ENCODE measurements at regions of chr7 and their contacts with region 1.

Region 1: GRCh38 chr7:98168181-98168905 is 42.9 kb upstream of the BHLHA15 start:
- DNase-seq: peak; percentile 83
- ATAC-seq: peak; percentile 75
- H3K4me3 ChIP-seq: no peak overlapping the region
- H3K4me3 Mint-ChIP-seq: no peak overlapping the region
- H3K27ac ChIP-seq: no peak overlapping the region
- H3K27ac Mint-ChIP-seq: no peak overlapping the region
- H3K4me1 ChIP-seq: peaks cover 0 to 6% of the 10 kb centered on the region in 2 donors
- H3K4me1 Mint-ChIP-seq: peaks cover 14% of the 10 kb centered on the region
- H3K27me3 ChIP-seq: peaks cover 0 to 4% (median 0%) of the 10 kb centered on the region in 4 experiments
- H3K27me3 Mint-ChIP-seq: peaks cover 4% of the 10 kb centered on the region
- CTCF ChIP-seq: peak; percentile 95

Region 2: DNA sequence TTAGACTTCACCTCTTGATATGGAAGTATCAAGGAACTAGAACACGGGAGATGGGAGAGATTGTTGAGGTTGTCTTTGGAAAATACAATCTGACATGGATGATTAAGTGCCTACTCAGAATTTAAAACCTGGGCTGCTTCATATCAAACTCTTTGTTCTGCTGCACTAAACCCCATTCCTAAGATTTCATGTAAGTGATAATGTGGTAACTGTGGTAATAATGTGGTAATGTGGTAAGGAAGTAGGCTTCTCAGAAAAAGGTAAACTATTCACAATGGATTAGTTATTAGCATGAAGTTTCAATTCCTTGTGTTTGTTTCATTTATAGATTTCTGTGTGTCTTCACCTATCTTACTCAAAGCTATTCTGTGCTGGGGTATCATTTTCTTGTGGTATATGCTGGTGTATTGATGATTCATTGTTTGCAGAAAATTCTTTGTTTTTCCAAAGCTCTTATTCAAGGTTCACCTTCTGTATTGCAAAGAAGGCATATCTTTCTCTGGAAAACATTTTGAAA is 566.3 kb before region 1 on chr7:
- CTCF ChIA-PET with region 1: no interaction called
- POLR2A ChIA-PET with region 1: no interaction called
- intact Hi-C with region 1: no loop called
- DNase-seq: no peak
- ATAC-seq: no peak
- H3K4me3 ChIP-seq: no peak overlapping the region
- H3K4me3 Mint-ChIP-seq: no peak overlapping the region
- H3K27ac ChIP-seq: no peak overlapping the region
- H3K27ac Mint-ChIP-seq: no peak overlapping the region
- H3K4me1 ChIP-seq: no peaks in the 10 kb centered on the region
- H3K4me1 Mint-ChIP-seq: no peaks in the 10 kb centered on the region
- H3K27me3 ChIP-seq: no peaks in the 10 kb centered on the region
- H3K27me3 Mint-ChIP-seq: no peaks in the 10 kb centered on the region
- CTCF ChIP-seq: no peak

Region 3: DNA sequence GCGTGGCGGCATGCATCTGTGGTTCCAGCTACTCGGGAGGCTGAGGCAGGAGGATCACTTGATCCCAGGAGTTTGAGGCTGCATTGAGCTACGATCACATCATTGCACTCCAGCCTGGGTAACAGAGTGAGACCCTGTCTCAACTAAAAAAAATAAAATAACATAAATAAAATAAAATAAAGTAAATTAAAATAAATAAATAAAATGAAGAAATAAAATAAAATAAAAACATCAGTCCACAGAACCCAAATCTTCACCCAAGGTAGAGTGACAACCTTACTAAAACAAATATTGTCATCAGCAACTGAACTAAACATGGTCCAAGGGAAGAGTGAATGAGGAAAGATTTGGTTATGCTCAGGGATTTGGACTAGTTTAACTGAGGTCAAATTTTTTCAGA is 153.5 kb before region 1 on chr7:
- CTCF ChIA-PET with region 1: interaction called, 383 read pairs
- POLR2A ChIA-PET with region 1: no interaction called
- intact Hi-C with region 1: no loop called
- DNase-seq: no peak
- ATAC-seq: no peak
- H3K4me3 ChIP-seq: no peak overlapping the region
- H3K4me3 Mint-ChIP-seq: no peak overlapping the region
- H3K27ac ChIP-seq: no peak overlapping the region
- H3K27ac Mint-ChIP-seq: no peak overlapping the region
- H3K4me1 ChIP-seq: no peaks in the 10 kb centered on the region
- H3K4me1 Mint-ChIP-seq: no peaks in the 10 kb centered on the region
- H3K27me3 ChIP-seq: peaks cover 0 to 6% (median under 1%) of the 10 kb centered on the region in 4 experiments
- H3K27me3 Mint-ChIP-seq: peaks cover 23% of the 10 kb centered on the region
- CTCF ChIP-seq: no peak

Region 4: DNA sequence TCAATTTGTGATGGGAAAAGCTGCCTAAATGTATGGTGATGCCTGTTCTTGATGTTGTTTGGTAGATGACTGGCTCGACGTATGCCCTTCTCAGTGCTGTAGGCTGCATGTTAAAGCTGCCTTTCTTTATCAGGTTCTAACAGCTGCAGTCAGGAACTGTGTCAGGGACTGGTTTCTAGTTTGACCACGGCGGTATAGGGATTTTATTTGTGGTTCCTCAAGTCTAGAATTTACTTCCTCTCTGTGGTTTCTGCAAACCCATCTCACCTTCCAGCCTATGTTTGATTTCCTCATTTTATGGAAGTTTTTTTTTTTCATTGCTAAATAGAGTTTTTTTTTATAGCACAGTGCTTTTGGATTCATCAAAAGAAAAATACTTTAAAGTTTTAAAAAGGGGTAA is 35.2 kb before region 1 on chr7:
- CTCF ChIA-PET with region 1: interaction called, 40 read pairs
- POLR2A ChIA-PET with region 1: no interaction called
- intact Hi-C with region 1: loop called (anchors 2 kb)
- DNase-seq: peak; percentile 85
- ATAC-seq: peak; percentile 80
- H3K4me3 ChIP-seq: peak overlapping the region in 1 of 5 experiments; percentile 5
- H3K4me3 Mint-ChIP-seq: peak overlapping the region; percentile 75
- H3K27ac ChIP-seq: no peak overlapping the region
- H3K27ac Mint-ChIP-seq: no peak overlapping the region
- H3K4me1 ChIP-seq: peaks cover 69 to 81% of the 10 kb centered on the region in 2 donors
- H3K4me1 Mint-ChIP-seq: peaks cover 63% of the 10 kb centered on the region
- H3K27me3 ChIP-seq: peaks cover 0 to 74% (median 52%) of the 10 kb centered on the region in 4 experiments
- H3K27me3 Mint-ChIP-seq: peaks cover 57% of the 10 kb centered on the region
- CTCF ChIP-seq: no peak

Region 5: GRCh38 chr7:98186452-98187137 is 18.3 kb after region 1 on chr7:
- CTCF ChIA-PET with region 1: interaction called, 37 read pairs
- POLR2A ChIA-PET with region 1: no interaction called
- intact Hi-C with region 1: no loop called
- DNase-seq: no peak
- ATAC-seq: no peak
- H3K4me3 ChIP-seq: no peak overlapping the region
- H3K4me3 Mint-ChIP-seq: no peak overlapping the region
- H3K27ac ChIP-seq: no peak overlapping the region
- H3K27ac Mint-ChIP-seq: no peak overlapping the region
- H3K4me1 ChIP-seq: peaks cover 4% of the 10 kb centered on the region in 2 donors
- H3K4me1 Mint-ChIP-seq: peaks cover 15% of the 10 kb centered on the region
- H3K27me3 ChIP-seq: peaks cover 0 to 5% (median 0%) of the 10 kb centered on the region in 4 experiments
- H3K27me3 Mint-ChIP-seq: no peaks in the 10 kb centered on the region
- CTCF ChIP-seq: no peak

Region 6: DNA sequence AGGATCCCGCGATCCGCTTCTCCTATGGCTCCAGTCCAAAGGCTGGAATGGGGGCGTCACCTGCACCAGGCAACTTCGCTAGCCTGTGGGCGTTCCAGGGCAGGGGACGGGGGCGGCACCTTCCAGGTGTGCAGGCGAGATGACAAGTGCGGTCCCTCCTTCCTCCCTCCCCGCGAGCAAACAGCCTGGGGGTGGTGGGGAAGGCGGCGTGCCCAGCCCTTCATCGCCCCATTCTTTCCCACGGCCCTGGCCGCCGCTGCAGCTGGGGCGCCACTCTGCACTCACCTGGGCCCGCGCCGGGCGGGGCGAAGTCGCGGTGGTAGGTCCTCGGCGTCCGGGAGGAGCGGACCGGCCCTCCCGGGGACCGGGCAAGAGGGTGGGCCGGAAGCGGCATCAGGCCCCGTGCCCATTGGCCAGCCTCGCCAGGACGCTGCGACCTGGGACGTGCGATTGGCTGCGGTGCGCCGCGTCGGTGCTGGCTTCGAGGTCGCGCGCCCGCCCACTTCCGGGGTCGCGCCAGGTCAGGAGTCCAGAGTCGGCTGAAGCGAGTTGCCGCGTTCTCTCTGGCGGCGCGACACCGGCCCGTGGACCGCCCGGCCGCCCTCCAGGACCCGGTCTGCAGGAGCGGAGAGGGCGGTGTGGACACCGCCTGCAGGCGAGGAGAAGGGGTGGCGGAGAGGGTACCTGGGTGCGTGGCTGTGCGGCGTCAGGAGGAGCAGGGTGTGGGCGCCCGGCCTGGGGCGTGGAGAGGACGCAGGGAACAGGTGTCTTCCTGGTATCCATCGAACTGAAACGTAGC is 83.7 kb after region 1 on chr7 and contains the start of gene TECPR1:
- CTCF ChIA-PET with region 1: interaction called, 17 read pairs
- POLR2A ChIA-PET with region 1: no interaction called
- intact Hi-C with region 1: loop called (anchors 2 kb)
- DNase-seq: peak; percentile 91
- ATAC-seq: peak; percentile 95
- H3K4me3 ChIP-seq: peak within 1 kb of the TSS; percentile 78 to 95 (median 83)
- H3K4me3 Mint-ChIP-seq: peak within 1 kb of the TSS; percentile 98
- H3K27ac ChIP-seq: peak within 1 kb of the TSS; percentile 68 to 71
- H3K27ac Mint-ChIP-seq: peak within 1 kb of the TSS; percentile 90
- H3K4me1 ChIP-seq: peaks cover 22 to 40% of the 10 kb centered on the region in 2 donors
- H3K4me1 Mint-ChIP-seq: peaks cover 34% of the 10 kb centered on the region
- H3K27me3 ChIP-seq: no peaks in the 10 kb centered on the region
- H3K27me3 Mint-ChIP-seq: no peaks in the 10 kb centered on the region
- CTCF ChIP-seq: no peak
- total RNA-seq, gene TECPR1: 52.2 and 66.4 TPM in 2 replicates

Measured in B cell (primary cell).